Gastrocnemius medialis (tissue), 4 donors: ENCODE measurements at regions of chr9 and their contacts with region 1.

Region 1: DNA sequence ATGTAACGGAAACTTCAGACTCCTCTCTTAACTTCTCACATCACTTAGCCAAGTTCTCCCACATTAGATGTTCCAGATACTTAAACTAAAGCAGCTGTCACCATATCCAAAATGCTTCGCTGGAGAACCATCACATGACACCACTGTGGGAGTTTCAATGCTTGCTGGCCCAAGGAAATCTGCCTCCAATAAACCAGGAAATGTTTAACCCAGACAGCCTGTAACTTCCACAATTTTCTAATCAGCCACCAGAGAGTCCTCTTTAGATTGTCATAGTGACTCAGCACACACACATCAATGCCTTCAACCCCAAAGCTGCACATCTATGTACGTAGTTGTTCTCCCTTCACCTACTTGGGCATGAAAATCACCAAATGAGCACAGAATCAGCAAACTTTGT is 118.7 kb downstream of the LPAR1 start:
- DNase-seq: no peak
- ATAC-seq: peak in 1 of 2 donors; percentile 39
- H3K4me3 ChIP-seq: no peak overlapping the region
- H3K27ac ChIP-seq: peak overlapping the region in 2 of 4 donors; percentile 3 to 10
- H3K4me1 ChIP-seq: no peaks in the 10 kb centered on the region
- H3K27me3 ChIP-seq: no peaks in the 10 kb centered on the region
- CTCF ChIP-seq: no peak
- POLR2A ChIP-seq: no peak

Region 2: DNA sequence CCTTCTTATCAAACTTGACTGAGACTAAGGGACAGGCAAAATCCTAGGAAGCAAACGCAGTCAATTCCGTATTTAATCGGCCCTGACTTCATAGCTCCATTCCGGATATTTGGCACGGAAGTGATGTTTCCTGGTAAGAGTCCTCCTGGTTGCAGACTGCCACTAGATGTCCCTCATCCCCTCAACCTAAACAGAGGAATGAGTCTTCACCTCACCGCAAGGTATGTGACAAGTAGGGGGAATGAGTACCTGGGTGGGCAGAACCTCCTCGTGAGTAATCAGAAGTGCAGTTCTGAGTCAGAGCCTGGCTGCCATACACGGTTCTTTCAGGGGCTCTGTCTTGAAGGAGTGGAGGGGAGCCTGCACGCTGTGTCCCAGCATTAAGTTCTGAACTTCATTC is 77.4 kb before region 1 on chr9:
- in situ Hi-C with region 1: loop called in 1 of 4 experiments (anchors 10 kb)
- intact Hi-C with region 1: no loop called
- DNase-seq: no peak
- ATAC-seq: no peak
- H3K4me3 ChIP-seq: no peak overlapping the region
- H3K27ac ChIP-seq: no peak overlapping the region
- H3K4me1 ChIP-seq: no peaks in the 10 kb centered on the region
- H3K27me3 ChIP-seq: no peaks in the 10 kb centered on the region
- CTCF ChIP-seq: no peak
- POLR2A ChIP-seq: no peak

Region 3: DNA sequence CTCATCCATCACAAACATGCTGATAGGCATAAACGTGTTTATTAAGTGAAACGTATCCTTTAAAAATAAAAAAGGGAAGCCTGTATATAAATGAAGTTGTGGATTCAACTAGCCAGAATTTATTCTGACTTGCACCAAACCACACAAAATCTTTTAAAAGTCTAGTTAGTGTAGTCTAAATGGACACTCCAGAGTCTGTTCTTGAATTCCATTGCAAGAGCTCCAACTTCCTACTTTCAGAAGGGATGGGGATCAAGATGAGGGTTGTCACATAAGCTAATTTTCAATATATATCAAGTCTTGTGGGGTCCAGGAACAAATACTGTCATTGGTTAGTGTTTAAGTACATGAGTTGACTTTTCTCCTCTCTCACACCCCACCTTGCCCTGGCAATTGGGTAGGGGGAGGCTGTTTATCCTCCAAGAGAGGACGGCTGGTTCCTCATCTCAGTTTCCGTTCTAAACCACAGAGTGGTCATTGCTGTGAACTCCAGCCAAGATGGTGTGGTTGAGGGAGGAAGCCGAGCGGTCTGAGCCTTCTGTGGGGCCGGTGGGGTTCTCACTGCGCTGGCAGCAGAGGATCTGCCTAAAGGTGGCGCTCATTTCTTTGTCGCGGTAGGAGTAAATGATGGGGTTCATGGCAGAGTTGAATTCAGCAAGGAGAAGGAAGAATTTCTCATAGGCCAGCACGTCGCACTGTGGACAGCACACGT is 44.5 kb before region 1 on chr9:
- in situ Hi-C with region 1: no loop called
- intact Hi-C with region 1: no loop called
- DNase-seq: peak; percentile 20 to 22
- ATAC-seq: no peak
- H3K4me3 ChIP-seq: no peak overlapping the region
- H3K27ac ChIP-seq: no peak overlapping the region
- H3K4me1 ChIP-seq: no peaks in the 10 kb centered on the region
- H3K27me3 ChIP-seq: no peaks in the 10 kb centered on the region
- CTCF ChIP-seq: no peak
- POLR2A ChIP-seq: no peak

Region 4: GRCh38 chr9:110900917-110901316 is 18.7 kb before region 1 on chr9:
- in situ Hi-C with region 1: no loop called
- intact Hi-C with region 1: no loop called
- DNase-seq: no peak
- ATAC-seq: no peak
- H3K4me3 ChIP-seq: no peak overlapping the region
- H3K27ac ChIP-seq: no peak overlapping the region
- H3K4me1 ChIP-seq: no peaks in the 10 kb centered on the region
- H3K27me3 ChIP-seq: no peaks in the 10 kb centered on the region
- CTCF ChIP-seq: no peak
- POLR2A ChIP-seq: no peak